B cell (primary cell): ENCODE measurements at regions of chr5 and their contacts with region 1.

Region 1: GRCh38 chr5:126339215-126339805 is 83.9 kb upstream of the GRAMD2B start:
- DNase-seq: peak; percentile 68
- ATAC-seq: no peak
- H3K4me3 ChIP-seq: no peak overlapping the region
- H3K4me3 Mint-ChIP-seq: no peak overlapping the region
- H3K27ac ChIP-seq: no peak overlapping the region
- H3K27ac Mint-ChIP-seq: no peak overlapping the region
- H3K4me1 ChIP-seq: no peaks in the 10 kb centered on the region
- H3K4me1 Mint-ChIP-seq: no peaks in the 10 kb centered on the region
- H3K27me3 ChIP-seq: peaks cover 0 to 7% (median 4%) of the 10 kb centered on the region in 4 experiments
- H3K27me3 Mint-ChIP-seq: peaks cover 9% of the 10 kb centered on the region
- CTCF ChIP-seq: peak; percentile 96

Region 2: GRCh38 chr5:126054577-126055347 is 284.5 kb before region 1 on chr5:
- CTCF ChIA-PET with region 1: no interaction called
- POLR2A ChIA-PET with region 1: no interaction called
- intact Hi-C with region 1: no loop called
- DNase-seq: no peak
- ATAC-seq: no peak
- H3K4me3 ChIP-seq: no peak overlapping the region
- H3K4me3 Mint-ChIP-seq: no peak overlapping the region
- H3K27ac ChIP-seq: no peak overlapping the region
- H3K27ac Mint-ChIP-seq: no peak overlapping the region
- H3K4me1 ChIP-seq: no peaks in the 10 kb centered on the region
- H3K4me1 Mint-ChIP-seq: no peaks in the 10 kb centered on the region
- H3K27me3 ChIP-seq: no peaks in the 10 kb centered on the region
- H3K27me3 Mint-ChIP-seq: peaks cover 4% of the 10 kb centered on the region
- CTCF ChIP-seq: no peak

Region 3: DNA sequence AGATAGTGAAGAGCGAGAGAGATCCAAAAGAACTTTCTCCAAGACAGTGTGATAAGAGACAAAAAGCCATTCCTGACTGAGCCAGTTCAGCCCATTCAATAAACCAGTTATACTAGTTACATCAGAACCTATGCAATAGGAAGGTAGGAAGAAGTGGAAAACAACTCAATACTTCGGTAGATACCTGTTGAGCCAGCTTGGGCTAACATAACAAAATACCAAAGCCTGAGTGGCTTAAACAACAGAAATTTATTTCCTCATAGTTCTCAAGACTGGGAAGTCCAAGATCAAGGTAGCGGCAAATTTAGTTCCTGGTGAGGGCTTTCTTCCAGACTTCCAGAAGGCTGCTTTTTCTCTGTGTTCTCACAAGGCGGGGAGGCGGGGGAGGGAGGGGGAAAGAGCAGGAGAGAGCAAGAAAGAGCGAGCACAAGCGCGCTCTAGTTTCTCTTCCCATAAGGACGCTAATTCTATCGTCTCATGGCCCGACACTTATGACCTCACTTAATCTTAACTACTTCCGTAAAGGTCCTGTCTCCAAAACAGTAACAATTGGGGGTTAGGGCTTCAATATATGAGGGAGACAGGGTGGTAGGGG is 130.5 kb before region 1 on chr5:
- CTCF ChIA-PET with region 1: no interaction called
- POLR2A ChIA-PET with region 1: no interaction called
- intact Hi-C with region 1: no loop called
- DNase-seq: no peak
- ATAC-seq: no peak
- H3K4me3 ChIP-seq: no peak overlapping the region
- H3K4me3 Mint-ChIP-seq: no peak overlapping the region
- H3K27ac ChIP-seq: no peak overlapping the region
- H3K27ac Mint-ChIP-seq: no peak overlapping the region
- H3K4me1 ChIP-seq: no peaks in the 10 kb centered on the region
- H3K4me1 Mint-ChIP-seq: no peaks in the 10 kb centered on the region
- H3K27me3 ChIP-seq: no peaks in the 10 kb centered on the region
- H3K27me3 Mint-ChIP-seq: peaks cover 3% of the 10 kb centered on the region
- CTCF ChIP-seq: no peak

Region 4: DNA sequence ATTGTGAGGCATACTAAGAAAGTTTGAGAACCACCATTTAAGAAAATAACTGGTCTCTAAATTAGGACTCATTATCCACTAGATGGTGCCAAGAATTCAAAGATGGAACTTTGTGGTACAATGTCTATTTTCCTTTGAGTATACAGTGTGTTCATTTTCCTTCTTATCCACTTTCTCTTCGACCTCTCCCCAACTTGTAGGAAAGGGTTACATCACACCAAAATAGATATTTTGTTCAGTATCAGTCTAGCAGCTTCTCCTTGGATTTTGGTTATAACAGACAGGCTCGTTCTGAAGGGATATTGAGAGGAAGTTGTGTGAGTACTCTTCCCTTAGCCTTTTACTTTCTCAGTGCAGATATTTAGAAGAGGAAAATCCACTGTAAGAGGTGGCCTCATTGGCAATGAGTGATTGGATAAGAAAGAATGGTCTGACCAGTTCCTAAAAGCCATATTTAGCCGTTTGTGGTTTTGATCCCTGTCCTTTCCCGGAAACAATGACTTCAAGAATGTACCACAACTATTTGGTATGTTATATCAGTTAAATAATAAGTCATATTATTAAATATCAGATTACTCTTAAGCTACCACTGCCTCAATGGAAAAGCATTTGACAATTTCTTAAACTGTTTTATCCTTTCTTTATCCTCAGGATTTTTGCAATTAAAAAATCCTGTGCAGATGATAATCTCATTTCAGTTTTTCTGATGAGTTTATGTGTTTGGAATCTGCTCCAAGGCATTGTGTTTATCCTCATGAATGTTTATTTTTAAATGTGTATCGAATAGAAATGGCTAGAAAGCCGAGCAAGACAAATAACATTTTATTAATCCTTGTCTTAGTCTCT is 14.9 kb after region 1 on chr5:
- CTCF ChIA-PET with region 1: interaction called, 21 read pairs
- POLR2A ChIA-PET with region 1: no interaction called
- intact Hi-C with region 1: no loop called
- DNase-seq: peak; percentile 20
- ATAC-seq: no peak
- H3K4me3 ChIP-seq: no peak overlapping the region
- H3K4me3 Mint-ChIP-seq: no peak overlapping the region
- H3K27ac ChIP-seq: no peak overlapping the region
- H3K27ac Mint-ChIP-seq: no peak overlapping the region
- H3K4me1 ChIP-seq: no peaks in the 10 kb centered on the region
- H3K4me1 Mint-ChIP-seq: peaks cover 4% of the 10 kb centered on the region
- H3K27me3 ChIP-seq: peaks cover 0 to 3% (median 0%) of the 10 kb centered on the region in 4 experiments
- H3K27me3 Mint-ChIP-seq: peaks cover 14% of the 10 kb centered on the region
- CTCF ChIP-seq: peak; percentile 13

Region 5: GRCh38 chr5:126531543-126532120 is 192.3 kb after region 1 on chr5:
- CTCF ChIA-PET with region 1: interaction called, 28 read pairs
- POLR2A ChIA-PET with region 1: no interaction called
- intact Hi-C with region 1: no loop called
- DNase-seq: no peak
- ATAC-seq: no peak
- H3K4me3 ChIP-seq: no peak overlapping the region
- H3K4me3 Mint-ChIP-seq: no peak overlapping the region
- H3K27ac ChIP-seq: no peak overlapping the region
- H3K27ac Mint-ChIP-seq: no peak overlapping the region
- H3K4me1 ChIP-seq: no peaks in the 10 kb centered on the region
- H3K4me1 Mint-ChIP-seq: no peaks in the 10 kb centered on the region
- H3K27me3 ChIP-seq: peaks cover 0 to 7% (median 0%) of the 10 kb centered on the region in 4 experiments
- H3K27me3 Mint-ChIP-seq: peaks cover 6% of the 10 kb centered on the region
- CTCF ChIP-seq: no peak

Region 6: DNA sequence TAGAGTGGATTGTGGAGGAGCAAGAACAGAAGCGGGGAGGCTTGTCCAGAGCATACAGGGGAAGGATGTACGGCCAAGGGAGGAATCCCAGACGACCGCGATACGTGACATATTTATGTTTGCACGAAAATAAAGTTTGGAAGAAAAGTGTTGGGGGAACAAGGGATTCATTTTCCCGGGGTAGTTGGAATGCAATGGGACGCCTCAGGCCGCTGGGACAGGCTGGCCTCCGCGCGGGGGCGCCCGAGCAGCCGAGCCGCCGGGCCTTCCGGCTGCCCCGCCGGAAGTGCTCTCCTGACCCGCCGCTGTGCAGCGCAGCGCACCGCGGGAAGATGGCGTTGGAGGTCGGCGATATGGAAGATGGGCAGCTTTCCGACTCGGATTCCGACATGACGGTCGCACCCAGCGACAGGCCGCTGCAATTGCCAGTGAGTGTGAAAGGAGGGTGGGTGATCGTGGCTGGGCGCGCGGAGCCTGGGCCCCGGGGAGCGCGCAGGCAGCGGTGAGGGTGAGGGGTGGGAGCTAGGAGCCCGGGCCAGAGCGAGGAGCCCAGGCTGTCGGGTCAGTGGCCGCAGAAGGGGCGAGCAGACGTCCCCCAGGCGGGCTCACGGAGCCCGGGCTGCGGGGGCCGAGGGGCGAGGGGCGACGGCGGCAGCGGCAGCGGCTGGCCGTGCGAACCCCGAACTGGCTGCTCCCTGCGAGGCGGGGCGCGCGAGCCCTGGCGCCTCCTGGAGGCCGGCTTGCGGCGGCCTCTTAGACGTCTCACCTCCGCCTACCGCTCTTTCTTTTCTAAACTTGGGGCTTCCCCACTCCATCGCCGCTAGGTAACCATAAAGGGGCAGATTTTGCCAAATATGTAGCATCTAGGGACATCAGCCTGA is 261.6 kb after region 1 on chr5 and contains the start of gene PHAX:
- CTCF ChIA-PET with region 1: interaction called, 13 read pairs
- POLR2A ChIA-PET with region 1: no interaction called
- intact Hi-C with region 1: loop called (anchors 1 kb)
- DNase-seq: peak; percentile 86
- ATAC-seq: peak; percentile 93
- H3K4me3 ChIP-seq: peak within 1 kb of the TSS; percentile 69 to 93 (median 86)
- H3K4me3 Mint-ChIP-seq: peak within 1 kb of the TSS; percentile 99
- H3K27ac ChIP-seq: peak within 1 kb of the TSS; percentile 50 to 71
- H3K27ac Mint-ChIP-seq: peak within 1 kb of the TSS; percentile 97
- H3K4me1 ChIP-seq: peaks cover 16 to 17% of the 10 kb centered on the region in 2 donors
- H3K4me1 Mint-ChIP-seq: peaks cover 29% of the 10 kb centered on the region
- H3K27me3 ChIP-seq: no peaks in the 10 kb centered on the region
- H3K27me3 Mint-ChIP-seq: no peaks in the 10 kb centered on the region
- CTCF ChIP-seq: peak; percentile 80
- total RNA-seq, gene PHAX: 42.7 and 43.9 TPM in 2 replicates

Region 7: GRCh38 chr5:127492854-127493738 is 1153.8 kb after region 1 on chr5:
- CTCF ChIA-PET with region 1: interaction called, 8 read pairs
- POLR2A ChIA-PET with region 1: no interaction called
- intact Hi-C with region 1: loop called (anchors 5 kb)
- DNase-seq: peak; percentile 68
- ATAC-seq: peak; percentile 45
- H3K4me3 ChIP-seq: no peak overlapping the region
- H3K4me3 Mint-ChIP-seq: no peak overlapping the region
- H3K27ac ChIP-seq: no peak overlapping the region
- H3K27ac Mint-ChIP-seq: no peak overlapping the region
- H3K4me1 ChIP-seq: no peaks in the 10 kb centered on the region
- H3K4me1 Mint-ChIP-seq: no peaks in the 10 kb centered on the region
- H3K27me3 ChIP-seq: peaks cover 0 to 6% (median 2%) of the 10 kb centered on the region in 4 experiments
- H3K27me3 Mint-ChIP-seq: peaks cover 23% of the 10 kb centered on the region
- CTCF ChIP-seq: peak; percentile 100